Mammary epithelial cell (primary cell): ENCODE measurements at regions of chr7 and their contacts with region 1.

Region 1: DNA sequence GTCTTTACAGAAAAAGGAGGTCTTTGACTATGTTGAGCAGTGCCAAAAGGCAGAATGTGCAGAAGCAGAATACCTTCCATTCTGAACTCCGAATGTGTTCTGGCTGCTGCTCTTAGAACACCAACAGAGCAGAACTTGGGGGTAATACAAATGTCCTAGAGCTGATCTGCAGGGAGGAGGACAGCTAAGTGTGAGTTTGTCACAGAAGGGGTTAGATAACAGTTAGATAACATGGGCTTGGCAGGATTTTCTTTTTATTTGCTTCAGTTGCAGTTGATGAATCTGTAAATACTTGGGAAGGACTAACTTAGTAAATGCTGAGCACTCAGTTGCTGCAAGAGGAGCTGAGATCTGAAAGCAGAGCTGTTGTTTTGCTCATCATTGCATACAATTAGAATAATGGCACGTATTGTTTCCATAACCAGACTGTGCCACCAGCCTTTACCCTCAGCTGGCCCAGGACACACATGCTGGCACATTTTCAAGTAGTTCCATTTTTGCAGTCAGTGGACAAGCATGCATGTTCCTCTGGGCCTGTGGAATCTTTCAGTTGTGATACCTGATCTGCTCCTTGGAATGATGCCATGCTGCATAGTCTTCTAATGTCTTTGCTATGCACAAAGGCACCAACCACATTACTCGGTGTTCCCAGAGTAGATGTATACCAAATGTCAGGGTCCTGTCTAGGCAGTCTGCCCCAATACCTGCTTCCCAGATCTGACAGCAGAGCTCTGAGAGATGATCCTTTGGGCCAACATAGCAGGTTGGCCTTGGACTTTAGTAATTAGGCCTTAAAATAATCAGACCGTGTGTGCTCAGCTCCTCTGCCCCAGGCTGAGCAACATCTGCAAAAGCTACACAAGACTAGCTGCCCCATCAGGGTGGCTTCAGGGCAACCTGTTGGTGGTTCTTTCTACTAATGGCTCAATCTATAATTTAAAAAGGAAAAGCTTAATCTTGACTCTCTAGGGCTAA is 55.7 kb downstream of the GSDME start:
- DNase-seq: peak; percentile 79
- H3K4me3 ChIP-seq: no peak overlapping the region
- H3K27ac ChIP-seq: no peak overlapping the region
- H3K4me1 ChIP-seq: peaks cover 39% of the 10 kb centered on the region
- H3K27me3 ChIP-seq: no peaks in the 10 kb centered on the region
- CTCF ChIP-seq: no peak

Region 2: DNA sequence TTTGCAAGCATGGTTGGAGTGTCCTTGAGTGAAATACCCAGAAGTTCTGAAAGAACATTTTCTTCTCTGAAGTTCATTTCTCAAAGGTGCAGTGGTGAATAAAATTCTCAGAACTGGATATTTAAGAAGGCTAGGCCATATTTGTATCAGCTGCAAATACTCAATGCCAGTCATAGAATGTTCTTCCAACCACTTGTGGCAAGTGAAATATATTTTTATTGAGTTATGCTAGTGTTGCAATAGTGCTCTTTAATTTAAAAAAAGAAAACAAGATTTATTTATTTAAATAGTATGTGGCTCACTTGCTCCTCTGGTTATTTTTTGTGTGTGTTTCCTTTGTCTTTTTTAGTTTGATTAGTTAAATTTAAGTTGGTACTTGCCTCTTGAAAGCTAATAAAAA is 63.8 kb before region 1 on chr7:
- CTCF ChIA-PET with region 1: no interaction called
- dilution Hi-C with region 1: loop called (anchors 5 kb)
- in situ Hi-C with region 1: no loop called
- intact Hi-C with region 1: no loop called
- DNase-seq: no peak
- H3K4me3 ChIP-seq: no peak overlapping the region
- H3K27ac ChIP-seq: no peak overlapping the region
- H3K4me1 ChIP-seq: no peaks in the 10 kb centered on the region
- H3K27me3 ChIP-seq: no peaks in the 10 kb centered on the region
- CTCF ChIP-seq: no peak

Region 3: GRCh38 chr7:25098096-25099046 is 396.8 kb after region 1 on chr7:
- CTCF ChIA-PET with region 1: no interaction called
- dilution Hi-C with region 1: no loop called
- in situ Hi-C with region 1: no loop called
- intact Hi-C with region 1: loop called (anchors 5 kb)
- DNase-seq: peak; percentile 31
- H3K4me3 ChIP-seq: no peak overlapping the region
- H3K27ac ChIP-seq: no peak overlapping the region
- H3K4me1 ChIP-seq: peaks cover 3% of the 10 kb centered on the region
- H3K27me3 ChIP-seq: no peaks in the 10 kb centered on the region
- CTCF ChIP-seq: peak; percentile 94 to 98